ENCODE measurements at regions of chr14 and their contacts with region 1.

Region 1: GRCh38 chr14:70640938-70641547 is 673 bp upstream of the TTC9 start:
- DNase-seq: peak; percentile 22
- H3K4me3 ChIP-seq: peak overlapping the region; percentile 60 to 66
- H3K27ac ChIP-seq: no peak overlapping the region
- H3K4me1 ChIP-seq: no peaks in the 10 kb centered on the region
- H3K27me3 ChIP-seq: no peaks in the 10 kb centered on the region
- CTCF ChIP-seq: no peak
- POLR2A ChIP-seq: no peak

Region 2: DNA sequence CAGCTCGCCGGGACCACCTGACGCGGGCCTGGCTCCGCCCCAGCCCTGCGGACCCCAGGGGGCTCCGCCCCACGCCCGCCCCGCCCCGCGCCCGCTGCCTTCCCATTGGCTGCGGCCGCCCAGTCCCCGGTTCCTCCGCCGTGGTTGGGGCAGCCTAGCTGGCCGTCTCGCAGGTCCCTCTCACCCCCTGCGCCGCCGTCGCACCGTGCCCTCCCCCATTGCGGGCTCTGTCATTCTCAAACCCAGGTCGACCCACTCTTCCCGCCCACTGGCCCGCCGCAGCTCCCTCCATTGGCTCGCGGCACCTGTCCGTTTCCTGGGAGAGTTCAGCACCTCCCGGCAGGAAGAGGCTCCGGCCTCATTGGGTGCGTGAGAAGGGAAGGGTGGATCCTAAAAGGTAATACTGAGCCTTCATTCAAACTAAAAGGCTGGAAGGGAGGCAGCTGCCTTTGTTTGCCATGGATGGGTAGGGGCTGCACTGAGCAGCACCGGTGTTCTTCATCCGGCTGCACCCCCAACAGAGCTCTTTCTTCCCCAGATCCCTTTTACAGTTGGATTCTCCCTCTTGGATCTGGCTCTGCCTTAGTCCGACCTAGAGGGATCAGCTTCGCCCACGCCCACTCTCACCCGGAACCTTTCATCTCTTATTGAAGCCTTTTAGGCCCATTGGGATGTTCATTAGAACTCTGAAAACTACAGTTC is 168.7 kb after region 1 on chr14:
- intact Hi-C with region 1: loop called (anchors 10 kb)
- DNase-seq: peak; percentile 96
- H3K4me3 ChIP-seq: peak overlapping the region; percentile 69 to 72
- H3K27ac ChIP-seq: peak overlapping the region; percentile 80 to 85
- H3K4me1 ChIP-seq: no peaks in the 10 kb centered on the region
- H3K27me3 ChIP-seq: no peaks in the 10 kb centered on the region
- CTCF ChIP-seq: no peak
- POLR2A ChIP-seq: no peak

Measured in prostate gland (tissue), 2 donors.